ENCODE measurements at regions of chr1 and their contacts with region 1.

Region 1: DNA sequence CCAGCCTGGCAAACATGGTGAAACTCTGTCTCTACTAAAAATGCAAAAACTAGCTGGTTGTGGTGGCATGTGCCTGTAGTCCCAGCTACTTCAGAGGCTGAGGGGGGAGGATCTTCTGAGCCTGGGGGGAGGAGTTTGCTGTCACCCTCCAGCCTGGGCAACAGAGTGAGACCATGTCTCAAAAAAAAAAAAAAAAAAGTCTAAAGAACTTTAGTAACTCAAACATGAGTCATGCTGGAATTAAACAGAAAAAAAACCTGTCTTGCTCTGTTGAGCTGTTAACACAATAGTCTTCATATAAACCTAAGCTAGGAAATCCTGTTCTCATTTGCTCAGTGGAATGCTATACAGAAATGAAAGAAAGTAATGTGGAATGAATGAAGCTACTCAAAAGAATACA is 16.7 kb upstream of the DISP1 start:
- DNase-seq: no peak
- ATAC-seq: no peak
- H3K4me3 ChIP-seq: no peak overlapping the region
- H3K27ac ChIP-seq: no peak overlapping the region
- H3K4me1 ChIP-seq: no peaks in the 10 kb centered on the region
- H3K27me3 ChIP-seq: peaks cover 11% of the 10 kb centered on the region; the same call in 1 of the 2 replicates
- CTCF ChIP-seq: no peak

Region 2: GRCh38 chr1:222918801-222919477 is 120.8 kb after region 1 on chr1:
- CTCF ChIA-PET with region 1: no interaction called
- POLR2A ChIA-PET with region 1: no interaction called
- in situ Hi-C with region 1: no loop called
- intact Hi-C with region 1: no loop called
- DNase-seq: no peak
- ATAC-seq: no peak
- H3K4me3 ChIP-seq: no peak overlapping the region
- H3K27ac ChIP-seq: no peak overlapping the region
- H3K4me1 ChIP-seq: no peaks in the 10 kb centered on the region
- H3K27me3 ChIP-seq: no peaks in the 10 kb centered on the region
- CTCF ChIP-seq: no peak

Region 3: DNA sequence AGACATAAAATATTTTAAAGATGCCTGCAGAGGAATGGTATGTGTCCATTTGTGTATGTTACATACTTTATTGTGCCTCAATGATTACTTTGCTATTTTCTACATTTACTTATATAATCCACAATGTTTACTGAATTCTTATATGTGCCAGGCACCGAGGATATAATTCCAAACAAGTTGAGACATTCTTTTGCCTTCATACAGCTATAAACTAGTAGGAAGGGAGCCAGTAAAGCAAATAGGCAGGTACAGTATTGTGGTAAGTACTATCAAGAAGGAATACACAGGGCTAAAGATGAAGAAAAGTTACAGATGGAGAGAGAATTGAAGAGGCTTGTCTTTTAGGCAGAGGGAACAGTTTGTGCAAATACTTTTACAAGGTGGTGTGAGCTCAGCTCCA is 148.3 kb after region 1 on chr1:
- CTCF ChIA-PET with region 1: no interaction called
- POLR2A ChIA-PET with region 1: interaction called, 25 read pairs
- in situ Hi-C with region 1: no loop called
- intact Hi-C with region 1: no loop called
- DNase-seq: no peak
- ATAC-seq: no peak
- H3K4me3 ChIP-seq: no peak overlapping the region
- H3K27ac ChIP-seq: no peak overlapping the region
- H3K4me1 ChIP-seq: no peaks in the 10 kb centered on the region
- H3K27me3 ChIP-seq: no peaks in the 10 kb centered on the region
- CTCF ChIP-seq: no peak

Measured in Panc1 (cell line).